Dendritic cell treated with granulocyte-macrophage colony-stimulating factor and Interleukin-4, amounts not matched to agents 40 ng/mL and 50 ng/mL, for 4 days (primary cell): ENCODE measurements at regions of chr5 and their contacts with region 1.

Region 1: DNA sequence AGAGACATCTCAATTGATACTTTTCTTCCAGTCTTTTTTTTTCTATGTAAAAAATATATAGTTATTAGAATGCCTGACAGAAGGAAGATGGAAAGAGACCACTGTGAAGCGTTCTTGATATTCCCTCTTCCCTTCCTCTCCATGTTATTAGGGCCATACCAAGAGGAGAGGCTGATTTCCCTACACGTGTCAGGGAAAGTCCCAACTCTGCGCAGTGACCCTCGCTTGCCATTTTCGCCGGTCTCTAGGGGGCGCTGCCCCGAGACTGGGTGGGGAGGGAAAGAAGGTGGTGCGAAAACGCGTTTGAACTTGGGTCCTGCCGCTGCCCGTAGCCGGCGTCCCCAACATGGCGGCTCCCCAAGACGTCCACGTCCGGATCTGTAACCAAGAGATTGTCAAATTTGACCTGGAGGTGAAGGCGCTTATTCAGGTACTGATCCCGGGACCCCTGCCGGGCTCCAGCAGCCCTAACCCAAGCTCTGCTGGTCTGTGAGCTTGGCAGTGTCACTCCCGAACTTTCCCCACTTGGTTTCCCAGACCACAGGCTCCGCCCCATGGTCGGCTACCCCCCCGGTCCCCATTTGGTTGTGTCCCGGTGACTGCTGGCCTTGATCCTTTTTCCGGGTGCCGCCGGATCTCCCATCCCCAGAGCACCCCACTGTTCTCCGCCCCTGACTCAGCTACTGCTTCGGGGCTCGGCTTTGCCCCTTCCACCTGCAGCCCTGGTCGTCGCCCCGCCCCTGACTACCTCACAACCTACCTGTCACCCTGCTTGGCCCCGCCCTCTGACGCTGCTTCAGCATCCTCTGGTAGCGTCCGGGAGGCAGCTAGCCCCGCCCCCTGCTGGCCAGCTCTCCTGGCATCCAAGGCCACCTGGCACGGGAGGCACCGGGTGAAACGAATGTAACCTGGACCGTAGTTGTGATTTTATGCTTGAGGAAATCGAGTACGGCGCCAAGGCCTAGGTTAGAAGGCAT is at the start of gene BNIP1:
- H3K4me3 Mint-ChIP-seq: peak within 1 kb of the TSS; percentile 99
- H3K27ac Mint-ChIP-seq: peak within 1 kb of the TSS; percentile 96
- H3K4me1 Mint-ChIP-seq: peaks cover 6% of the 10 kb centered on the region
- H3K27me3 Mint-ChIP-seq: no peaks in the 10 kb centered on the region

Region 2: GRCh38 chr5:172868924-172869591 is 275.4 kb before region 1 on chr5:
- intact Hi-C with region 1: no loop called
- H3K4me3 Mint-ChIP-seq: no peak overlapping the region
- H3K27ac Mint-ChIP-seq: peak overlapping the region; percentile 70
- H3K4me1 Mint-ChIP-seq: peaks cover 6% of the 10 kb centered on the region
- H3K27me3 Mint-ChIP-seq: no peaks in the 10 kb centered on the region

Region 3: DNA sequence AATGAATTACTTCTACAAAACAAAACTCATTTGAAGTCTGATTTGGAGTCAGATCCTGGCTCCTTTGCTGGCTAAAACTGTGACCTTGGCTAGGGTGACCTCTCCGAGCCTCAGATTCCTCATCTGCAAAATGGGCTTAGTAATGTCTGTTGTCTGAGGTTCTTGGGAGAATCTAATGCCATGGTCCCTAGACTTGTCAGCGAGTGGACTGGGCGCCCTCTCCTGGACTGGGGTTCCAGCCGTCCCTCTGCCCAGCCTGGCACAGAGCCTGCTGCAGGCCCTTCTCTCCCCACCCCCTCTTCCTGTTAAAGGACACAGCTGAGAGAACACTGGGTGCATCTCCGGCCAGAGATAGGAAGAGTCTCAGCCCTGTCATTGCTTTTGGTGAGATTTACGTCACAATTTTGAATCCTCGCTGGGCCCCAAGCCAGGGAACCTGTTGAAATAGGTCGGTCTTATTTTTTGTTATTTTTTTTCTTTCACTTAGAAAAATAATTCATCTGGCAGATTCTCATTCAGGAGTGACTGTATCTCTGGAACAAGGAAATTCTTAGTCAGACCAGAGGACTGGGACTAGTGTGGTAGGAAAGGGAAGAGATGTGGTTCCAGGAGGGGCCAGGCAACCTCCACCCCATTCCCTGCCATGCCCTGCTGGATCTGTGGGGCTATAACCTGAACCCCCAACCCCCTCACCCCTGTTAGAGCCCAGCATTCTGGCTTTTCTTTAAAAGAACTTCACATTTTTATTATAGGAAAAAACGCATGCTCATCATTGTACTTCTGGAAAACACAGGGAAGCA is 233.5 kb before region 1 on chr5:
- intact Hi-C with region 1: no loop called
- H3K4me3 Mint-ChIP-seq: no peak overlapping the region
- H3K27ac Mint-ChIP-seq: peak overlapping the region; percentile 71
- H3K4me1 Mint-ChIP-seq: peaks cover 24% of the 10 kb centered on the region
- H3K27me3 Mint-ChIP-seq: no peaks in the 10 kb centered on the region

Region 4: DNA sequence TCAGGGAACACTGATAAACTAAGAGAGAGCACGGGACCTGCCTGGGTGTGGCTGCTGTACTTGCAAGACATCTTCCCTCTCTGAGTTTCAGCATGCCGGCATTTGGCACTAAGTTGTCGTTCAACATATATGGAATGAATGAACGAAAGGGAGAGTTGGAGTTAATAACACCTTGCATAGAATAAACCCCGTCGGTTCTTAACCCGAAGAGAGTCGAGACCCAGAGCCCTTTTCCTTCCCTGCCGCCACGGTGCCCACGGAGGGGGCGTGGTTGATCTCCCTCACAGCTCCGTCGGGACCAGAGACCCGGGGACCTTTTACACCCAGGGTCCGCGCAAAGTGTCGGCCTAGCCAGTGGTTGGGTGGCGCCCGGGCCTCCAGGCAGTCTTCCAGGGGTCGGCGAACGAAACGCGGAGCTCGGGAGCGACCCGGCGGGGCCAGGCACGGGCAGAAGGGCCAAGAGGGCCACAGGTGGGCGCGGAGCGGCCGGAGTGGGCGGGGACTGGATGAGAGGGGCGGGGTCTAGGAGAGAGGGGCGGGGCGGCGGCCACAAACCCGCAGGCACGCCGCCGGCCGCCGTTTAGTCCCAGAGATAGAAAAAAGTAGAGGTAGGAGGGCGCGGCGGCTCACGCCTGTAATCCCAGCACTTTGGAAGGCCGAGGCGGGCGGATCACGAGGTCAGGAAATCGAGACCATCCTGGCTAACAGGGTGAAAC is 186.0 kb before region 1 on chr5:
- intact Hi-C with region 1: loop called (anchors 1 kb)
- H3K4me3 Mint-ChIP-seq: peak overlapping the region; percentile 91
- H3K27ac Mint-ChIP-seq: peak overlapping the region; percentile 94
- H3K4me1 Mint-ChIP-seq: peaks cover 40% of the 10 kb centered on the region
- H3K27me3 Mint-ChIP-seq: peaks cover 8% of the 10 kb centered on the region

Region 5: DNA sequence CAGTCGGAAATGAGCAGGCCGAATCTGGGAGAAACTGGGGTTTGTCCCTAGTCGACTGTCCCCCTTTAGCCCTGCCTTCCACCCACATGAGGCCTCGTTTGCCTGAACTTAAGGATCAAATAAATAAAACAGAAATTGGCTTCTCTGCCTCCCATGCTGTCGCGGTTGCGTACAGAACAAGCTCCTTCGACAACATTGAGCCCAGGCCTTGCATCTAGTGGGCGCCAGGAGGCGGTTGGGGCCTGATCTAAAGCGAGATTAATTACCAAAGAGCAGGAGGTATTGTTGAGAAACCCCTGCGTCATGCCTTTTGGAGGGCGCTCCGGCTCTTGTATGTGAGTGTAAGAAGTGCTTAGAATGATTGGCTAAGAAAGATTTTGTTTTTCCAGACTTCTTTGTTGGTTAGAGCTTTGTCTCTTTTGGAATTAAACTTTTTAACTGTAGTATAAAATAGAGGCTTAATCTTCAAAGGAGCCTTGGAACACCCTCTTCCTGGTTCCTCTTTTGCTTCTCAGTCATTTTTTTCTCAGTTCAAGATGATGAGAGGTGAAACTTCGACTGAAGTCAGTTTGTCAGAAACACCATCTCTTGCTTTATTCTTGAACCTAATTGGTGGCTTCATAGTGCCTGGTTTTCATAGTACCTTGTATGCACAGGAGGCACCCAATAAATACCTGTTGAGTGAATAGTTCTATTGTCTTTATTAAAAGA is 160.1 kb before region 1 on chr5:
- intact Hi-C with region 1: loop called (anchors 2 kb)
- H3K4me3 Mint-ChIP-seq: peak overlapping the region; percentile 98
- H3K27ac Mint-ChIP-seq: peak overlapping the region; percentile 99
- H3K4me1 Mint-ChIP-seq: peaks cover 35% of the 10 kb centered on the region
- H3K27me3 Mint-ChIP-seq: no peaks in the 10 kb centered on the region

Region 6: DNA sequence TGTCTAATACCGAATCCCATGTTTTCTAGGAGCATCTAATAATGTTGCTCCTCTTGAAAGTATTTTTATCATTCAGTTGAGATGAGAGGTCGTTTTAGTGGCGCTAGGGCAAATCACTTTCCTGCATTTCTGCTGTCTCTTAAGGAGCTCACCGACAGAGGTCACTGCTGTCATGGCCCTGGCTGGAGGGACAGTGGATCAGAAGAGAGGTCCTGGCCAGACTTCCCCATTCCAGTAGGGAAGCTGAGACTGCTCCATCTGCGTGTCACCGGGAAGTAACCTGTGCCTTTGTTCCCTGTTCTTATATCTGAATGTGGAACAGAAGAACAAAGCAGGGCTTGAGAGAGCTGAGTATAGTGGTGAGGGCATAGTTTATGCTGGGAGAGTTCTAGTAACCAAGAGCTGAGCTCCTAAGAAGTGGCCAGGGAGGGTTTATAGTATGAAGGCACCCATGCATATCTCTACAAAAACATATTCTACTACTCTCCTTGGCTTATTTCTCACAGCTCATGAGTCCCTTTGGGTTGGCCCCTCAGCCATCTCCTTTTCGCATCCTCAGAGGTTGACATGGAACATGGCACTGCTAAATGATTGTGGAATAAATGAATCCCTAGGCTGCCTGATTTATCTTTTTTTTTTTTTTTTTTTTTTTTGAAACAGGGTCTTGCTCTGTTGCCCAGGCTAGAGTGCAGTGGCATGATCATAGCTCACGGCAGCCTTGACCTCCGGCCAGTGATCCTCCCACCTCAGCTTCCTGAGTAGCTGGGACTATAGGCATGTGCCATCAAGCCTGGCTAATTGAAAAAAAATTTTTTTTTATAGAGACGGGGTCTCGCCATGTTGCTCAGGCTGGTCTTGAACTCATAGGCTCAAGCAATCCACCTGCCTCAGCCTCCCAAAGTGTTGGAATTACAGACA is 133.7 kb before region 1 on chr5:
- intact Hi-C with region 1: loop called (anchors 2 kb)
- H3K4me3 Mint-ChIP-seq: no peak overlapping the region
- H3K27ac Mint-ChIP-seq: peak overlapping the region; percentile 53
- H3K4me1 Mint-ChIP-seq: peaks cover 81% of the 10 kb centered on the region
- H3K27me3 Mint-ChIP-seq: no peaks in the 10 kb centered on the region

Region 7: DNA sequence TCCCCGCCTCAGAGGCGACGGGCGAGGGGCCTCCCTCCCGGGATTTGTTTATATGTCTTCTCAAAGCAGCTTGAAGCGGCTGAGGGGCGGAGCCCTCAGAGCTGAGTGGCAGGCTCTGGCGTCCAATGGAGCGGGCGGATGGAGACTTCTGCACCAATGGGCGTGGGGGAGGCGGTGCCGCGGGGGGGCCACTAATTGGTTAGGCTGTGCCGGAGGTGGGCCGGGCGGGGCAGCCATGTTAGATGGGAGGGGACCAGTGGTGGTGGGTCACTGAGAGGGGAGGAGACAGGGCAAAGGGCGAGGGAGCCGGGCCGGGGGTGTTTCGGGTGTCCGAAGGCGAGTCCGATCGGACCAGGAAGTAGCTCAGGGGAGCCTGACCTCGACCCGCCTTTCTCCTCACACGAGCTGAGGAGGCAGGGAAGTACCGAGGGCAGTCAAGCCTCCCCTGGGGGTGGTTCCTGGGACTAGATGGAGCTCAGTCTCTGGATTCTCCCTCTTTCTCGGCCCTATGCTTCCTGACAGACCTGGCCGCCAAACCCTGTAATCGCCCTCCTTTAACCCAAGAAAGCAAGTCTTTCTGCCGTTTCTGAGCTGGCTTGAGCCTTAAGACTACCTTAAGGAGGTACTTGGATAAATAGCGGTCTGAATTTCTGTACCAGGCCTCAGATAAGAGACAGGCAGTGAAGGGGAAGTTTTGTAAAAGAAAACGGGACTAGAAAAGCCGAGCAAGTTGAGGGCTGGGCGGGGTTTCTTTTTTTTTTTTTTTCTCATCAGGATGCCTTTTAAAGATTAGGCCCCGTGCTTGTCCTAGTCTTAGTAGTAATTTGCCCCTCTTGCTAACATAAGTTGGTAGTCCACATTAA is 87.2 kb before region 1 on chr5:
- intact Hi-C with region 1: loop called (anchors 2 kb)
- H3K4me3 Mint-ChIP-seq: peak overlapping the region; percentile 83
- H3K27ac Mint-ChIP-seq: peak overlapping the region; percentile 87
- H3K4me1 Mint-ChIP-seq: peaks cover 27% of the 10 kb centered on the region
- H3K27me3 Mint-ChIP-seq: no peaks in the 10 kb centered on the region

Region 8: GRCh38 chr5:173247041-173247440 is 102.6 kb after region 1 on chr5:
- intact Hi-C with region 1: no loop called
- H3K4me3 Mint-ChIP-seq: no peak overlapping the region
- H3K27ac Mint-ChIP-seq: no peak overlapping the region
- H3K4me1 Mint-ChIP-seq: peaks cover 12% of the 10 kb centered on the region
- H3K27me3 Mint-ChIP-seq: peaks cover 89% of the 10 kb centered on the region